H1 (cell line): ENCODE measurements at regions of chr9 and their contacts with region 1.

Region 1: GRCh38 chr9:94623253-94623652 is 16.1 kb downstream of the FBP1 start:
- DNase-seq: peak in 1 of 2 experiments; percentile 86
- H3K4me3 ChIP-seq: no peak overlapping the region
- H3K27ac ChIP-seq: no peak overlapping the region
- H3K4me1 ChIP-seq: peaks cover 0 to 6% (median 2%) of the 10 kb centered on the region in 4 experiments; a peak in 5 of 7 replicates
- H3K27me3 ChIP-seq: no peaks in the 10 kb centered on the region
- CTCF ChIP-seq: peak; percentile 69 to 77 (median 70)
- EP300 ChIP-seq: no peak
- POLR2A ChIP-seq: no peak
- RAD21 ChIP-seq: peak; percentile 44 to 65

Region 2: GRCh38 chr9:94603259-94604160 is 19.7 kb before region 1 on chr9:
- CTCF ChIA-PET with region 1: interaction called, 13 read pairs
- POLR2A ChIA-PET with region 1: no interaction called
- DNase-seq: peak; percentile 64 to 95
- H3K4me3 ChIP-seq: no peak overlapping the region
- H3K27ac ChIP-seq: no peak overlapping the region
- H3K4me1 ChIP-seq: peaks cover 5 to 8% (median 6%) of the 10 kb centered on the region in 4 experiments; a peak in 6 of 7 replicates
- H3K27me3 ChIP-seq: no peaks in the 10 kb centered on the region; a peak in 1 of 7 replicates
- CTCF ChIP-seq: peak; percentile 84 to 92 (median 84)
- EP300 ChIP-seq: no peak
- POLR2A ChIP-seq: no peak
- RAD21 ChIP-seq: peak; percentile 92 to 93

Region 3: GRCh38 chr9:94611638-94612068 is 11.6 kb before region 1 on chr9:
- CTCF ChIA-PET with region 1: interaction called, 41 read pairs
- POLR2A ChIA-PET with region 1: no interaction called
- DNase-seq: no peak
- H3K4me3 ChIP-seq: no peak overlapping the region
- H3K27ac ChIP-seq: no peak overlapping the region
- H3K4me1 ChIP-seq: peaks cover 4 to 10% (median 6%) of the 10 kb centered on the region in 4 experiments; a peak in 6 of 7 replicates
- H3K27me3 ChIP-seq: no peaks in the 10 kb centered on the region; a peak in 1 of 7 replicates
- CTCF ChIP-seq: no peak
- EP300 ChIP-seq: no peak
- POLR2A ChIP-seq: no peak
- RAD21 ChIP-seq: no peak

Region 4: DNA sequence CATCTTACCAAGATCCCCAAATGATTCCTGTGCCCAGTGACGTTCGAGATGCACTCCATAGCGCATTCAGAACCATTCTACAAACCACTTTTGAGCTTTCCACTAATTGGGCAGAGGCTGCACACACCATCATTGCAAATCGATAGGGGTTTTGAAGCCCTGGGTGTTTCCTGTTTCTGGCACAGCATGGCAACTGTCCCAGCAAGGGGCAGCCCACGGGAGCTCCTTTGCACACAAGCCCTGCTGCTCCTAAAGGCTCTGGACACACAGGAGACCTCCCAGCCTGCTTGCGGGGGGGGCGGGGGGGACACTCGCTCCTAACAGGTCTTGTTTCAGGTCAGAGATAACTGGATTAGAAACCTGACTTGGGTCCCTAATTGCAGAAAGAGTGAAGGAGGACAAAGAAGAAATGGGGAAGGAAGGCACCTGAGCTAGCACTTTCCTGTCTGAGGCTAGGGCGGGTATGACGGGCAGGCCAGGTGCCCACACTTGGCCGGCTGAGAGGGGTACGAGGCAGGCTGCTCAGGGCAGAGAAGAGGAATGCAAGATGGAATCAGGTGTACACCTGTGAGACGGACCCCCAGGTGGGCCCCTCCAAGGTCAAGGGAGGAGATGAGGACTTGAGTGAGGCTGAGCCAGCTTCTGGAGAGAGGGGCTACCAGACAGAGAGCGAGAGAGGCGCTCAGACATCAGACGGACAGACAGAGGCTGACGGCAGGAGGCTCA is 15.2 kb after region 1 on chr9:
- CTCF ChIA-PET with region 1: interaction called, 37 read pairs
- POLR2A ChIA-PET with region 1: no interaction called
- DNase-seq: no peak
- H3K4me3 ChIP-seq: peak overlapping the region; percentile 39 to 63 (median 54)
- H3K27ac ChIP-seq: no peak overlapping the region
- H3K4me1 ChIP-seq: peaks cover 3 to 16% (median 8%) of the 10 kb centered on the region in 4 experiments
- H3K27me3 ChIP-seq: peaks cover 27 to 55% (median 50%) of the 10 kb centered on the region in 4 experiments
- CTCF ChIP-seq: no peak
- EP300 ChIP-seq: no peak
- POLR2A ChIP-seq: no peak
- RAD21 ChIP-seq: no peak

Region 5: GRCh38 chr9:94767331-94768072 is 144.2 kb after region 1 on chr9:
- CTCF ChIA-PET with region 1: no interaction called
- POLR2A ChIA-PET with region 1: no interaction called
- DNase-seq: no peak
- H3K4me3 ChIP-seq: no peak overlapping the region
- H3K27ac ChIP-seq: no peak overlapping the region
- H3K4me1 ChIP-seq: no peaks in the 10 kb centered on the region
- H3K27me3 ChIP-seq: no peaks in the 10 kb centered on the region
- CTCF ChIP-seq: no peak
- EP300 ChIP-seq: no peak
- POLR2A ChIP-seq: no peak
- RAD21 ChIP-seq: no peak